Activated CD8-positive, alpha-beta T cell treated with anti-CD3 and anti-CD28 coated beads for 36 hours (primary cell): ENCODE measurements at regions of chr5 and their contacts with region 1.

Region 1: DNA sequence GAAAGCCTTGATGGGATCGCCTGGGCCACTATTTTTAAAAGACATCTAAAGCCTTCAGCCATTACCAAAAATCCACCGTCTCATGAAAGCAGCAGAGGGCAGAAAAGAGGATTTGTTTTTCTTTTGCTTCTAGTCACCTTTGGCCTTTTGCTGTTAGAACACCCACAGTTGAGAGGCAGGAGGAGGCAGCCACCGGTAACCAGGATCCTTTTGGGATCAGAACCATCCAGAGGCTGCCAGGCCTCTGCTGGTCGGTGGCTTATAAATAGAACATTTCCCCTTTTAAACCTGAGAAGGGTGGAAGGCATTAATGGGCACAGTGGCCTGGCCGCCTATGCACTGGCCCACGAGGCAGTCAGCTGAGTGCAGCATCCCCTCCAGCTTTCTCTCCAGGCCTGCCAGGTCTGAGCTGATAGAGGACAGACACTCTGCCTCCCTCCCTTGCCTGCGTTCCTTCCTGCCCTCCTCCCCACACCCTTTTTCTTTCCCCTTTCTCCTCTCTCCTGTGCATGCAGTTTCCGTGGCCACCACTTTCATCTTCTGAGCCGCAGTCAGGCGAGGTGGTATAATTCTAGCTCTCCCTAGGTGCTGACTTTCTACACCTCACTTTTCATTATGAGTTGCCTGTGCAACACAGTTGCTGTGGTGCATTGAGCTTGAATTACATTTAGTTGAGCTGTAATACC is 253.4 kb downstream of the ARHGAP26 start:
- DNase-seq: peak; percentile 81
- ATAC-seq: peak; percentile 81
- H3K4me3 Mint-ChIP-seq: peak overlapping the region; percentile 28
- H3K27ac Mint-ChIP-seq: peak overlapping the region; percentile 59
- H3K4me1 Mint-ChIP-seq: peaks cover 66% of the 10 kb centered on the region
- H3K27me3 Mint-ChIP-seq: no peaks in the 10 kb centered on the region
- CTCF ChIP-seq: no peak

Region 2: DNA sequence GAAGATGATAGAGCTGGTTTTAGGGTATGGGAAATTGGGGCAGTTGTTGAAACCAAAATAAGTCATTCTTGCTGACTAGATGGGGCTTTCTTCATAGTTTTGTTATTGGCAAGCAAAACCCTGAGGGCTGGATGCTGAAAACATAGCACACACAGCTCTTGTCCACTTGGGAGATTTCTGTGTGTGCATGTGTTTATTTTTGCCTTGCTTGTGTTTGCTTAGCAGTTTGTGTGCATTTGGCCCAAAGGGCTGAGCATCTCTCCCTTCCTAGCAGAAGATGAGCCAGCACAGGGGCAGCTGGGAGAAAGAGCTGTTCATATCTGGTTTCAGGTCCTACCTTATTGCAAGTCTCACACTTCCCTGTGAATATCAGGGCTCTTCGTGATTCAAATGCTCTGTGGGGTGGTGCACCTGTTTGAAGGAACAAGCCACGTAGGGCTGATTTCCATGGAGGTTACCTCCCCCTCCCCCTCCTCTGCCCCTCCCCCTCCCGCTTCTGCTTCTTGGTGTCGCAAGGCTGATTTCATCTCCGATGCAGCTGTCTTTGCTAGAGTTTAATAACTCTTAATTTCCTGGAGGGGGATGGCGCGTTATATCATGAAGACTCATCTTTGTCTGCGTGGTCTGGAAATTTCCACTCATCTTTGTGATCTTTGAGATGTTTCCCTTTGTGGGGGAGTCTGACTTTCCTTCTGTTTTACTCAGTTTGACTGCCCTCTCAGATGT is 43.2 kb after region 1 on chr5:
- CTCF ChIA-PET with region 1: interaction called, 3 read pairs
- POLR2A ChIA-PET with region 1: no interaction called
- intact Hi-C with region 1: loop called (anchors 5 kb)
- DNase-seq: peak; percentile 58
- ATAC-seq: peak; percentile 73
- H3K4me3 Mint-ChIP-seq: no peak overlapping the region
- H3K27ac Mint-ChIP-seq: peak overlapping the region; percentile 87
- H3K4me1 Mint-ChIP-seq: peaks cover 40% of the 10 kb centered on the region
- H3K27me3 Mint-ChIP-seq: no peaks in the 10 kb centered on the region
- CTCF ChIP-seq: no peak

Region 3: DNA sequence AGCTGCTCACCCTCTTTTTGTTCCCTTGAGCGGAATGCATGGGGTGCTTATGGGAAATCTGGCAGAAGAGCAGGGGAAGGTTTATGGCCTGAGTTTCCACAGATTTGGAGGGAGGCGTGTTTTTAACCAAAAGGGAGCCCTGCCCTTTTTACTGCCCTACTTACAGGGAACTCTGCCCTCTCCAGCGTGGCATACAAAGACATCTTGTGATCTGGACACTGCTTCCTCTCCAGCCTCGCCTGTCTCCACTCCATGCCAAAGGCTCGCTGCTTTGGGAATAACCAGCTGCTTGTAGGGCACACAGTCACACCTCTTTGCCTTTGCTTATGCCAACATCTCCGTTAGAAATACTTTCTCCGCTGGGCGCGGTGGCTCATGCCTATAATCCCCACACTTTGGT is 60.9 kb after region 1 on chr5:
- CTCF ChIA-PET with region 1: no interaction called
- POLR2A ChIA-PET with region 1: no interaction called
- intact Hi-C with region 1: no loop called
- DNase-seq: no peak
- ATAC-seq: no peak
- H3K4me3 Mint-ChIP-seq: no peak overlapping the region
- H3K27ac Mint-ChIP-seq: no peak overlapping the region
- H3K4me1 Mint-ChIP-seq: peaks cover 12% of the 10 kb centered on the region
- H3K27me3 Mint-ChIP-seq: no peaks in the 10 kb centered on the region
- CTCF ChIP-seq: no peak

Region 4: DNA sequence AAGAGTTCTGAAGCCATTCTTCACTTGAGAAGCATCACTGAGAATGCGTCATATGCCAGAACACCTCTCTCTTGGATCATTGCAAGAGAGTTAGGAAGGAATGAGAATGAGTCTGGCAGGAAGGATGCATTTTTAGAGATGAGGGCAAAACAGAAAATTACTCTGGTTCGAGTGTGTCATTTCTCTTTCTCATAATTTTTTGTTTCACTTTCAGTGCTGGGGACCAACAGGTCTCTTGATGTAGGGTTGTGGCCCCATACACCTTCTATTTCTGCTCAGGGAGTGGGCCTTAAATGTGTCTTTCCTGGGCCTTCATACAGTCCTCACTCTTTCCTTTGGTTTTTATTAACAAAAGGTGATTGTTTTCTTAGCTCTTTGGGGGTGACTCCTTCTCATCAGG is 77.6 kb after region 1 on chr5:
- CTCF ChIA-PET with region 1: interaction called, 3 read pairs
- POLR2A ChIA-PET with region 1: no interaction called
- intact Hi-C with region 1: loop called (anchors 5 kb)
- DNase-seq: peak; percentile 21
- ATAC-seq: peak; percentile 82
- H3K4me3 Mint-ChIP-seq: peak overlapping the region; percentile 34
- H3K27ac Mint-ChIP-seq: peak overlapping the region; percentile 94
- H3K4me1 Mint-ChIP-seq: peaks cover 40% of the 10 kb centered on the region
- H3K27me3 Mint-ChIP-seq: no peaks in the 10 kb centered on the region
- CTCF ChIP-seq: no peak